HepG2 (cell line): ENCODE measurements at regions of chr5 and their contacts with region 1.

Region 1: GRCh38 chr5:24042685-24043084 is 535.3 kb downstream of the PRDM9 start:
- DNase-seq: no peak
- ATAC-seq: no peak
- H3K4me3 ChIP-seq: no peak overlapping the region
- H3K27ac ChIP-seq: no peak overlapping the region
- H3K4me1 ChIP-seq: no peaks in the 10 kb centered on the region
- H3K27me3 ChIP-seq: no peaks in the 10 kb centered on the region
- CTCF ChIP-seq: no peak
- EP300 ChIP-seq: no peak
- POLR2A ChIP-seq: no peak
- RAD21 ChIP-seq: no peak

Region 2: GRCh38 chr5:23977997-23978396 is 64.7 kb before region 1 on chr5:
- CTCF ChIA-PET with region 1: no interaction called
- POLR2A ChIA-PET with region 1: no interaction called
- in situ Hi-C with region 1: no loop called
- intact Hi-C with region 1: loop called (anchors 2 kb)
- DNase-seq: peak; percentile 25
- ATAC-seq: peak; percentile 44; the same call in 1 of the 3 replicates
- H3K4me3 ChIP-seq: no peak overlapping the region
- H3K27ac ChIP-seq: no peak overlapping the region
- H3K4me1 ChIP-seq: no peaks in the 10 kb centered on the region
- H3K27me3 ChIP-seq: no peaks in the 10 kb centered on the region; a peak in 1 of 5 replicates
- CTCF ChIP-seq: no peak
- EP300 ChIP-seq: no peak
- POLR2A ChIP-seq: no peak
- RAD21 ChIP-seq: no peak